Cardiac septum (tissue), 1 donor: ENCODE measurements at regions of chr6 and their contacts with region 1.

Region 1: DNA sequence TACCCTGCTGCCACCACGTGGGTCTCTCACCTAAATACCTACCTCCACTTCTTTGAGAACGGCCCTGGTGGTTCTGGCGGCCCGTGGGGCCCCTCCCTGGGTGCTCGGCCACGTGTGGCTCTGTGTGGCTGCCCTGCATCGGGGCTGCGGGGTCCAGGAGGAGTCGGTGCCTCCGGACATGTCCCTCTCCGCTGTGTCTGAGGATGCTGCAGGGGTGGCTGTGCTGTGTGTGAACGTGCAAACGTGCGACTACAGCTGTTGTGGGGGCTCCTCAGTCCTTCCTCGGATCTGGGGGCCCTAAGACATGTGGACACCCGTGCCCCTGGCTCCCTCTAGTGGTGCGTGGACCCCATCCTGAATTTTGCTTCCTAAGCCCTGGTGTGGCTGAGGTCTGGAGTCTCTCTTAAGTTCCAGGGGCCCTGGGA is 691.8 kb downstream of the QKI start:
- DNase-seq: peak; percentile 82

Region 2: DNA sequence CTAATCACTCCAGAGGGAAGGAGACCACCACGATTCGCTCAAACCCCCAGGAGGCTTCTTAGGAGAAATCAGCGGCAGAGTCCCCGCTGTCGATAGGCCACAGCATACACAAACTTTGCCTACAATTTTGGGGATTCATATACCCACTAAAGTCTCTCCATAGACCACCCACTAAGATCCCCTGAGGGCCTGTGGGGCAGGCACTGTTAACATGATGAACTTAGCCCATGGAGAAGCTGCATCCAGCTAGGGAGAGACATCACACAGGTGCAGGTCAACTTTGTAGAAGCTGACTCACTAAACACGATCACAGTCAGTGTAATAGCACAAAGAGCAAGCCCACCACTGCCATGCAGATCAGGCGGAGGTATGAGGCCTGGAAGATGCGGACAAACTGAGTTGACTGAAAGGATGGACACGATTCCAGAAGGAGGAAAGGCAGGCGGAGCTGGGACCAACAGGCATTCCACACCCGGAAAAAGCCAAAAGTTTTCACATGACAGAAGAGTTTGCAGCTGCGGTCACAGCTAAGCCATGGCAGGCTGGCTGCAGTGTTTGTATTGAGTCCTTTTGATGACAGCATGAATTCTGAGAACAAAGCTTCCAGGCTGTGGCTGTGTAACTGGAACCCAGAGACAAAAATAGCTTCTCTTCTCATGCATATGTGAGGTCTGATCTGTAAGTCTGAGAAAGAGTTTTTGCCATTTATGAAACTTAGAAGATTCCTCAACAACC is 767.5 kb before region 1 on chr6:
- intact Hi-C with region 1: loop called (anchors 5 kb)
- DNase-seq: peak; percentile 82

Region 3: GRCh38 chr6:163427498-163428254 is 678.7 kb before region 1 on chr6:
- intact Hi-C with region 1: loop called (anchors 2 kb)
- DNase-seq: no peak

Region 4: DNA sequence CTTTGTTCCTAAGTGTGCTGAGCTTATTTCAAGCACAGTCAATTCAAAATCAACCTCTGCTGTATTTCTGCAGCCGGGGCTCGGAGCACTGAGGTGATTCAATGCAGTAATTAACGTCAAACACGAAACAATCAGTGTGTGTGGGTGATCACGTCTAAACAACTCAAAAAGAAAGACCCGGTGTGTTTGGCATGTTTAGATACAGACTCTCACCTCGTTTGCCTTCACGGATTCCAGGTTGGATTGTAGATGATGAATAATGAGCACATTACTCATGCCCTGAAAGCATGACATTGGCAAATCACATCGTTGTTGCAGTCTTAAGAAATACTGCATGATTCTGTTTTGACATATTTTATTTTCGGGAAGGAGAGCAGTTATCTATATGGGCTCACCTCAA is 460.8 kb before region 1 on chr6:
- intact Hi-C with region 1: no loop called
- DNase-seq: no peak

Region 5: DNA sequence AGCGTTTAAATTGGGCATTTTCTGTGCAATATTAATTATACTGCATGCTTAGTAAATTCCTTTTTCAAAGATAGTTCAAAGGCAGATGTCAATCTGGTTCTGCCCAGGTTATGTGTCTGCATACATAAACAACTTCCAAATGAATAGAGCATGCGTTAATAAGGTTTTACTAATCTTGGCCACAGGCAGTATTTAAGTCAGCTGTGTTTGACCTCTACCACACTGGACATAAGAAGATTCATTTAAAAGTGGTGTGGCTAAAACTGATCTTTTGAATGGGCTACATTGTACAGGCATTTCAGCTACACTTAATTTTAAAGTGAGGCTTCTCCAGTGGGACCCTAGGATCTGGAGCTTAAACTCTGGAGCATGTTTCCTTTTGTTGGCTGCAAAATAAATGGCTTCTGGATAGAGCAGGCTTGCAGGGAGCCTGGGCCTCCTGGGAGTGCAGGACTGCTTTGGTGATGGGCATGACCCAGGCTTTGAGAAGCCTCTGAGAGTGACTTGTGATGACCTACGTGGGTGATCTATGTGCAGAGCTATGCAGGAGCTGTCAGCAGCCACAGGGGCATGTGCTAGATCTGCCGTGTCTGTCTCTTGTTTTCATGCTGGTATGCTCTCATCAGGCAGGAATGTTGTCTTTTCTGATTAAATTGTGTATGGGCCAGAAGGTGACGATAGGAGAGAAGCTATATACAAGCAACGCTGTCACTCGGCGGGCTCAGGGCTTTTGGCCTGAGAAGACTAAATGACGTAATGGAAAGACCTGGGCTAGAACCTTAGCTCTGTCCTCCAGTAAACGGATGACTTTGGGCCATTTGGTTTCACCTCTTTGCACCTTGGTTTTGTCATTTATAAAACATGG is 360.6 kb before region 1 on chr6:
- intact Hi-C with region 1: loop called (anchors 5 kb)
- DNase-seq: peak; percentile 85

Region 6: GRCh38 chr6:163965426-163966348 is 140.7 kb before region 1 on chr6:
- intact Hi-C with region 1: loop called (anchors 1 kb)
- DNase-seq: no peak

Region 7: DNA sequence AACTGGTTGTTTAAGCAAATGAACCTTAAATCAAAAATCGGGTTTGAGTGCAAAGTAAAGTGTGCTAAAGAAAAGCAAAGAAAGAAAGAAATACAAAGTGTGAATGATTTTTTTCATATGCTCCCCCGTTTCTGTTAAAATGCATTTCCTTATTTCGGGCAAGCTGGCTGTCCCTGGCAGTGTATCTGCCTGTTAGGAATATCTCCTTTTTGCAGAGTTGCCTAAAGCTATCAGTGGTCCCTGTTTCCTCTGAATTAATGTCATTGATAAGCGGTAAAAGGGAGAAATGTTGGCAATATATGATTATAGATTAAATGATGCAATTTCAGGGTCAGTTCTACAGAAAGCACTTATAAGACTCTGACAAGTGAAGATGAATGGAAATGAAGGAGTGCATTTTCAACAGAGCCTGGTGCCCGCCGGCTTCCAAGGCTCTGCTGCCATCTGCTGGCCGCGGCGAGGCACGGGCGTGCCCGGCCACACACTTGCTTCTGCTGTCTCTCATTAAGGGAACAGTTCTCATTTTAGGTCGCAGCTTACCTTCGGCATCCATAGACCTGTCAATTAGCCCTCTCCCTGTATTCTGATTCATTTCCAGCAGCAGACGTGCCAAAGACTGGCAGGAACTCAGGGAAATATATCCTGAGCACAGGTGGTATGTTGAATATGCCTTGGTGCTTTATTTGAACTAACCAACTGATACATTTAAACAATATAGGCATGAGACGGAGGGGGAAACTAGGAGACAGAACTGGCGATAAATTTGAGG is 821.1 kb after region 1 on chr6:
- intact Hi-C with region 1: loop called (anchors 5 kb)
- DNase-seq: peak; percentile 87